Mucosa of descending colon (tissue), 3 donors: ENCODE measurements at regions of chr9 and their contacts with region 1.

Region 1: GRCh38 chr9:84697509-84698114 is 28.1 kb downstream of the NTRK2 start:
- DNase-seq: peak; percentile 69 to 93 (median 88)
- ATAC-seq: peak; percentile 95
- H3K4me3 ChIP-seq: no peak overlapping the region
- H3K4me1 ChIP-seq: no peaks in the 10 kb centered on the region
- CTCF ChIP-seq: peak; percentile 35

Region 2: DNA sequence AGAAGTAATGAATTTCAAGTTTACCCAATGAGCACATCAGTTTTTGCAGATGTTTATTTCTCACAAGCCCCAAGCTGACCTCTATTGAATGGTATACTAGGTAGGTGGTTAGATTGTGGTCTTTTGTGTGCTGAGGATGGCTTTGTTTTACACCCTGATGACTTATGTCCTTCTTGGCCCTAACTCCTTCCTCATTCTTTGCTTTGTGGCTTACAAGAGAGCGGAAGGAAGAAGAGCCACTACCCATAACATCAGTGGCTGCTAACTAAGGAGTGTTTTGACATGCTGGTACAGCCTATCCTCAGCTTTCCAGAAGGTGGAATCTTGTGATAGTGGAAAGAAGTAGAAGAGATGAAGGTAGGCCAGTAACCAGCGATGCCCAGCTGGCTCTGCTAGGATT is 113.7 kb before region 1 on chr9:
- intact Hi-C with region 1: no loop called
- DNase-seq: no peak
- ATAC-seq: no peak
- H3K4me3 ChIP-seq: no peak overlapping the region
- H3K4me1 ChIP-seq: no peaks in the 10 kb centered on the region
- CTCF ChIP-seq: no peak

Region 3: DNA sequence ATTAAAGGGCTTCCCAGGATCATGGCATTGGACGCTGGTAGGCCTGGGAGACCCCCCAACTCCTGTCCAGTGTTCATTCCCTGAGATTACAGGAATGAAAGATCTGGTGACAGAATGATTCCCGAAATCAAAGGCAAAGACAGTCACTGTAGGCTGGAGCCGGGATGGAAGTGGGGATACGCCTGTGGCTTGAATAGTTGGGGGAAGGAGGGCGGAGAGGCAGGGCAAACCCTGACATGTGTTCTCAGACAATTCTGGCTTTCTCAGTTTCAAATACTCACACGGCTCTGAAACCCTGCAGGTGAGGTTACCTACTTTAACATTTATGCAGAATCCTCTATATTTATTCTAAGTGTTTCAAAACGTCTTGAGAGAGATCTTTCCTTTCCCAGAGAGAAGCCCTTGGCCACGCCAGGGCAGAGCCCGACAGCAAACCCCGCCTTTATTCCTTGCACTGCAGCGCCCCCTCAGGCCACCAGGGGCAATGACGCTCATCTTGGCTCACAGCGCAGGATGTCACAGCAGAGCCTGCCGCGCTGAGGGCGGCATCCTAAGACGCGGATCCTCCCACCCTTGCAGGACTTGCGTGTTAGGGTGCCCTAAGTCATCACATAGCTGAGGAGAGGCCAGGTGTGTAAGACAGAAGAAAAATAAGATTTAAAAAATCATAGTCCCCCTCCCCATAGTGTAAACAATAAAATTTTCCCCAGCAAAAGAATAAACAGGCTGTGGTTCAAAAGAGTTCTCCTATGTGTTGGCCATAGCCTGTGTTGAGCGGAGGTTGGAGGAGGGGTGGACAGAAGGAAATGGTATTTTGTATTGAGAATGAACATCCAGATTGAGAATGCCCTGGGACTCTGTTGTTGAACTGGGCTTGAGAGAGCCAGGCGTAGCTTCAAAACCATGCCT is 256.4 kb after region 1 on chr9:
- intact Hi-C with region 1: loop called (anchors 10 kb)
- DNase-seq: peak; percentile 81 to 90 (median 81)
- ATAC-seq: peak; percentile 98
- H3K4me3 ChIP-seq: no peak overlapping the region
- H3K4me1 ChIP-seq: peaks cover 7% of the 10 kb centered on the region
- CTCF ChIP-seq: peak; percentile 83